Right lobe of liver (tissue), 6 donors: ENCODE measurements at regions of chr3 and their contacts with region 1.

Region 1: GRCh38 chr3:184160456-184160855 is 5.3 kb downstream of the DVL3 start:
- DNase-seq: no peak
- ATAC-seq: peak in 3 of 4 donors; percentile 17 to 35 (median 34)
- H3K4me3 ChIP-seq: no peak overlapping the region
- H3K27ac ChIP-seq: no peak overlapping the region
- H3K4me1 ChIP-seq: peaks cover 0 to 24% (median 11%) of the 10 kb centered on the region in 4 donors
- H3K27me3 ChIP-seq: no peaks in the 10 kb centered on the region
- CTCF ChIP-seq: no peak
- POLR2A ChIP-seq: no peak

Region 2: DNA sequence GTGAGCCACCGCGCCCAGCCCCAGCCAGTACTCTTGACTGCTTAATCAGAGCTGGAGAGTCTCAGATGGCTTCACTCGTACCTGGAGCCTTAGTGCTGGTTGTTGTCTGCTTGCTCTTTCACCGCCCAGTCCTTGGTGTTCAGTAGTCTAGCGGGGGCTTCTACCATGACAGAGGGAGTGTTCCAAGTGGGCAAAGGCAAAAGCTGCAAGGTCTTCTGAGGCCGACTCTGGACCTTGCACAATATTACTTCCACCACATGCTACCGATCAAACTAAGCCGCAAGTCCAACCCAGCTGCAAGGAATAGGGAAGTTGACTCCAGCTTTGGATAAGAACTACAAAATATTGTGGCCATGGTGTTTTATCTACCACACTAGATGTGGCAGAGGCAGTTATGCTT is 282.4 kb before region 1 on chr3:
- intact Hi-C with region 1: no loop called
- DNase-seq: no peak
- ATAC-seq: peak; percentile 50 to 69 (median 62)
- H3K4me3 ChIP-seq: no peak overlapping the region
- H3K27ac ChIP-seq: no peak overlapping the region
- H3K4me1 ChIP-seq: peaks cover 0 to 13% (median 0%) of the 10 kb centered on the region in 4 donors
- H3K27me3 ChIP-seq: no peaks in the 10 kb centered on the region
- CTCF ChIP-seq: no peak
- POLR2A ChIP-seq: no peak

Region 3: DNA sequence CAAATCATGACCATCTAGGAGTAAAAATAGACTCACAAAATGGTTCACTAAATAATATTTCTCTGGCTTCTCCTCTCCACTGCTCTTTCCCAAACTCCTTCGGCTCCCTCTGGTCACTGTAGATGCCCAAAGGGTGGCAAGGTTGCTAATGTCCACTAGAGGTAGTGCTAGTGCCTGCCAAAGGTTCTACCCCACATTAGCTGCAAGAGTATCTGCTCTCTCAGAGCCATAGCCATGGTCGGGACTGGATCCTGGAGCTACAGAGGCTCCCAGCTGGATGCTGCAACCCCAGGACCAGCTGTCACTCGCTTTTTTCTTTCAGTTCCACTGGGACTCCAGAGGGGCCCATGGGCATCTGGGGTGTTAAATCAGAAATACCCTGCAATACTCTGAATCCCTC is 120.4 kb before region 1 on chr3:
- intact Hi-C with region 1: no loop called
- DNase-seq: peak in 1 of 3 donors; percentile 53
- ATAC-seq: peak; percentile 95 to 98 (median 96)
- H3K4me3 ChIP-seq: no peak overlapping the region
- H3K27ac ChIP-seq: no peak overlapping the region
- H3K4me1 ChIP-seq: no peaks in the 10 kb centered on the region
- H3K27me3 ChIP-seq: no peaks in the 10 kb centered on the region
- CTCF ChIP-seq: peak; percentile 48 to 68 (median 58)
- POLR2A ChIP-seq: no peak

Region 4: GRCh38 chr3:184305577-184305976 is 145.1 kb after region 1 on chr3:
- intact Hi-C with region 1: loop called in 1 of 2 experiments (anchors 10 kb)
- DNase-seq: no peak
- ATAC-seq: peak; percentile 43 to 58 (median 46)
- H3K4me3 ChIP-seq: no peak overlapping the region
- H3K27ac ChIP-seq: no peak overlapping the region
- H3K4me1 ChIP-seq: no peaks in the 10 kb centered on the region
- H3K27me3 ChIP-seq: no peaks in the 10 kb centered on the region
- CTCF ChIP-seq: peak; percentile 27 to 48 (median 36)
- POLR2A ChIP-seq: no peak

Region 5: DNA sequence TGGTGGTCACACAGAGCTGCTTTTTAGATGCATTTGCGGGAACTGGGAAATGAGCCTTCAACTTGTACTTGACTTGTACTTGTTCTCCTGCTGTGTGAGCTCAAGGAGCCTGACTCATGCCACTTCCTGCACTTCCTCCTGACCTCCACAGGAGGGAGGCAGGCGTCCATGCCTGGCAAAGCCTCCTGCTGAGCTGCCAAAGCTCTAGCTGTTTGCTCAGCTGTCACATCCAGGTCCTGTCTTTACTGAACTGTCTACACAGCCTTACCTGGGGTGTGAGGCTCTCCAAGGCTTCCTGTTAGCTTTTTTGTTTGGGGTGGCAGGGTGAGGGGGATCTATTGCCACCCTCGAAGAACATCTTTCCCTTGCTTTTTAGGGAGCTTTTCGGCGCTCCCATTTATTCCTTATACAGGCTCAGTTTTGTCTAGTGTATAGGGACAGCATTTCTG is 211.1 kb after region 1 on chr3:
- intact Hi-C with region 1: no loop called
- DNase-seq: peak; percentile 82 to 85 (median 85)
- ATAC-seq: peak; percentile 94 to 98 (median 96)
- H3K4me3 ChIP-seq: no peak overlapping the region
- H3K27ac ChIP-seq: no peak overlapping the region
- H3K4me1 ChIP-seq: peaks cover 0 to 22% (median 9%) of the 10 kb centered on the region in 4 donors
- H3K27me3 ChIP-seq: no peaks in the 10 kb centered on the region
- CTCF ChIP-seq: peak; percentile 92 to 97 (median 96)
- POLR2A ChIP-seq: no peak